Right cardiac atrium (tissue), 5 donors: ENCODE measurements at regions of chr2 and their contacts with region 1.

Region 1: GRCh38 chr2:108855194-108855593 is 68.6 kb downstream of the CCDC138 start:
- DNase-seq: no peak
- ATAC-seq: no peak
- H3K4me3 ChIP-seq: no peak overlapping the region
- H3K27ac ChIP-seq: no peak overlapping the region
- H3K4me1 ChIP-seq: no peaks in the 10 kb centered on the region
- H3K27me3 ChIP-seq: no peaks in the 10 kb centered on the region

Region 2: DNA sequence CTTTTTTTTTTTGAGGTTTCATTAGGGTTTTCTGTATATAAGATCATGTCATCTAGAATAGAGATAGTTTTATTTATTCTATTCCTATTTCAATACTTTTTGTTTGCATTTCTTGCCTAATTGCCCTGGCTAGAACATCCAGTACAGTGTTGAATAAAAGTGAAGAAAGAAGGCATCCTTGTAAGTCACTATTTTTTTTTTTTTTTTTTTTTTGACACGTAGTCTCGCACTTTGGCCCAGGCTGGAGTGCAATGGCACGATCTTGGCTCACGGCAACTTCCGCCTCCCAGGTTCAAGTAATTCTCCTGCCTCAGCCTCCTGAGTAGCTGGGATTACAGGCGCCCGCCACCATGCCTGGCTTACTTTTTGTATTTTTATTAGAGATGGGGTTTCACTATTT is 163.7 kb before region 1 on chr2:
- intact Hi-C with region 1: no loop called
- DNase-seq: no peak
- ATAC-seq: no peak
- H3K4me3 ChIP-seq: no peak overlapping the region
- H3K27ac ChIP-seq: no peak overlapping the region
- H3K4me1 ChIP-seq: no peaks in the 10 kb centered on the region
- H3K27me3 ChIP-seq: no peaks in the 10 kb centered on the region

Region 3: DNA sequence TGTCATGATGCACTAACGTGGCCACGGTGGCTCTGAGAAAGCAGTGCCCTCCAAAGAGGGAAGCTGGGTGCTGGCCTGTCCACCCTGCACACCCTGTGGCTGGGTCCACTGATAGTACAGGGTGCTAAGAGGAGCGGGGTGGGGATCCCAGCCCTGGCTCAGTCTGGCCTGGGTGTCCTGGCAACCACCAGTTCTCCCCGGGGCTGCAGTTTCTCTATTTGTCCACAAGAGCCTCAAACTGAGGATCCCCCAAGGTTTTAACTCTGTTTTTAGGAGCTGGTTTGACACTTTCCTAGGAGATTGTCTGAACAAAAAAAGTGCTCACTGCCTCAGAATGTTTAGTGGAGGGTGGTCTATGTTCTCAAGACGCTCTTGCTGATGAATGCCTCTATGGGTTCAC is 104.8 kb after region 1 on chr2:
- intact Hi-C with region 1: no loop called
- DNase-seq: no peak
- ATAC-seq: peak in 1 of 2 donors; percentile 38
- H3K4me3 ChIP-seq: no peak overlapping the region
- H3K27ac ChIP-seq: no peak overlapping the region
- H3K4me1 ChIP-seq: peaks cover 3% of the 10 kb centered on the region
- H3K27me3 ChIP-seq: no peaks in the 10 kb centered on the region

Region 4: GRCh38 chr2:108998911-108999310 is 143.7 kb after region 1 on chr2:
- intact Hi-C with region 1: loop called in 1 of 4 experiments (anchors 10 kb)
- DNase-seq: no peak
- ATAC-seq: no peak
- H3K4me3 ChIP-seq: no peak overlapping the region
- H3K27ac ChIP-seq: no peak overlapping the region
- H3K4me1 ChIP-seq: no peaks in the 10 kb centered on the region
- H3K27me3 ChIP-seq: no peaks in the 10 kb centered on the region

Region 5: DNA sequence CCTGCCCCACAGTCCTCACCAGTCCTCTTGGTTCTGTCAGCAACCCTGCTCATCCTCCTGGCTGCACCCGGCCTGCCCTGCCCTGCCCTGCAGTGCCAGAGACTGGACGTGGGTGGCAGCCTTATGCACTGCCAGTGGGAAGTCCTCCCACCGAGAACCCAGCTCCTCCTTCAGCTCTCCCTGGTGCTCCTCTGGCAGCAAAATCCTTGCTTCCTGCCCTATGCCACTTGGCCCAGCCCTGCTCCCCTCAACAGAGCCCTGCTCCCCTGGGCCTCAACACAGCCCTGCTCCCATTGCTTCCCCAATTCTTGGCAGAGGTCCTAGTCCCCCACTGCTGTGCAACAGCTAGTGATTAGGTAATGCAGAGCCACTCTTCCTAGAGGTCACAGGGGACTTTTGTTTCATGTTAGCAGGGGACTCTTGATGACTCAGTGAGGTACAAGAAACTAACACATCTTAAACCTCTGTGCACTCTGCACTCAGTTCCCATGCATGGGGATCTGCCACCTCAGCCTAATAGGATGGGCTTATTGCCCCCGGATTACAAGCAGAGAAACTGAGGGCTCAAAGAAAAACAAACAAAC is 191.8 kb after region 1 on chr2:
- intact Hi-C with region 1: no loop called
- DNase-seq: no peak
- ATAC-seq: peak in 1 of 2 donors; percentile 28
- H3K4me3 ChIP-seq: no peak overlapping the region
- H3K27ac ChIP-seq: no peak overlapping the region
- H3K4me1 ChIP-seq: no peaks in the 10 kb centered on the region
- H3K27me3 ChIP-seq: no peaks in the 10 kb centered on the region